ENCODE measurements at regions of chr5 and their contacts with region 1.

Region 1: GRCh38 chr5:50751064-50751657 is 84.7 kb downstream of the PARP8 start:
- DNase-seq: no peak
- H3K4me3 Mint-ChIP-seq: no peak overlapping the region
- H3K27ac Mint-ChIP-seq: no peak overlapping the region
- H3K4me1 Mint-ChIP-seq: peaks cover 39% of the 10 kb centered on the region
- H3K27me3 Mint-ChIP-seq: no peaks in the 10 kb centered on the region

Region 2: GRCh38 chr5:50325237-50325832 is 425.8 kb before region 1 on chr5:
- intact Hi-C with region 1: loop called (anchors 5 kb)
- DNase-seq: no peak
- H3K4me3 Mint-ChIP-seq: no peak overlapping the region
- H3K27ac Mint-ChIP-seq: no peak overlapping the region
- H3K4me1 Mint-ChIP-seq: peaks cover 12% of the 10 kb centered on the region
- H3K27me3 Mint-ChIP-seq: peaks cover 17% of the 10 kb centered on the region

Region 3: GRCh38 chr5:50667653-50668595 is 83.2 kb before region 1 on chr5:
- intact Hi-C with region 1: loop called (anchors 1 kb)
- DNase-seq: peak; percentile 74
- H3K4me3 Mint-ChIP-seq: peak overlapping the region; percentile 98
- H3K27ac Mint-ChIP-seq: peak overlapping the region; percentile 100
- H3K4me1 Mint-ChIP-seq: peaks cover 47% of the 10 kb centered on the region
- H3K27me3 Mint-ChIP-seq: no peaks in the 10 kb centered on the region

Measured in activated T-helper 2 cell treated with anti-CD3 and anti-CD28 coated beads, Interferon-gamma antibody, Interleukin-2, Interleukin-4, amounts not matched to agents 10 μg/mL and 5 μg/mL and 100 μg/mL, durations not matched to agents 14 hours and 24 hours and 36 hours (primary cell).